MCF 10A (cell line): ENCODE measurements at regions of chr2 and their contacts with region 1.

Region 1: GRCh38 chr2:38315707-38316333 is 61.3 kb downstream of the ATL2 start:
- DNase-seq: peak; percentile 63
- H3K4me3 Mint-ChIP-seq: no peak overlapping the region
- H3K27ac Mint-ChIP-seq: no peak overlapping the region
- H3K4me1 Mint-ChIP-seq: no peaks in the 10 kb centered on the region
- H3K27me3 Mint-ChIP-seq: no peaks in the 10 kb centered on the region
- CTCF ChIP-seq: peak; percentile 75

Region 2: DNA sequence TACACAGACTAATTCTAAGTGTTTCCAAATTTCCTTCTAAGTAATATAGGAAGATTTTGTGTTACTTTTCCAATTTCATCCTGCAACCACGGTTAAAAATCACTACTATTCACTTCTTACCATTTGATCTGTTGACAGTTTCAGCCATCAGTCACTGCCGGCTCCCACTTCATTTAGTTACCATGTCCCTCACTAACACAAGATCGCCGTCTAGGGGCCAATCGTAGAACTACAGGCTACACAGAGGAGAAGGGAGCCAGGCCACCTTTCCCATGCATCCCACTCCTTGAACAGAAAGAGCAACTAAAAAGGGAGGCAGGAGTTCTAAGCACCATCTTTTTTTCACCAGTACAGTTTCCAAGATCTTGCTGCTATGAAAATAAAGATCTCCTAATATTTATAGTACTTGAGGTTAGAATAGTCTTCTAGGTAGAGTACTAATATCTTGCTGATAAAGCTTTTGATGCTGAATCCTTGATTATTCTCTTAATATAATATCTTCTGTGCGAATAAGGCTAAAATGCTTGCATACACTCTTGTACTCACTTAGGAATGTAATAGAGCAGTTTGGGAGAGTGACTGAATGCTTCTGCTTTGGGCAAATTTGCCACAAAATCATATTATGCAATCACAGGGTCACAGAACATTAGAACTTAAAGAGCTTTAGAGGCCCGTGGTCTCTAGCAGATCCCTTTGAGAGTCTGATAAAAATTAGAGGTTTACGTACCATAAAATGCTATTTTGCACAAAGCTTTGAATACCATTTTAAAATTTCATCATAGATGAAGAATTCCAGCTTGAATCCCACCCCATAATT is 200.4 kb before region 1 on chr2:
- CTCF ChIA-PET with region 1: no interaction called
- POLR2A ChIA-PET with region 1: no interaction called
- intact Hi-C with region 1: no loop called
- DNase-seq: peak; percentile 94
- H3K4me3 Mint-ChIP-seq: no peak overlapping the region
- H3K27ac Mint-ChIP-seq: no peak overlapping the region
- H3K4me1 Mint-ChIP-seq: peaks cover 28% of the 10 kb centered on the region
- H3K27me3 Mint-ChIP-seq: no peaks in the 10 kb centered on the region
- CTCF ChIP-seq: peak; percentile 96

Region 3: GRCh38 chr2:38508311-38509039 is 192.7 kb after region 1 on chr2:
- CTCF ChIA-PET with region 1: interaction called, 78 read pairs
- POLR2A ChIA-PET with region 1: interaction called, 24 read pairs
- intact Hi-C with region 1: loop called (anchors 1 kb)
- DNase-seq: peak; percentile 95
- H3K4me3 Mint-ChIP-seq: no peak overlapping the region
- H3K27ac Mint-ChIP-seq: no peak overlapping the region
- H3K4me1 Mint-ChIP-seq: peaks cover 34% of the 10 kb centered on the region
- H3K27me3 Mint-ChIP-seq: no peaks in the 10 kb centered on the region
- CTCF ChIP-seq: peak; percentile 51

Region 4: GRCh38 chr2:38528008-38528442 is 212.2 kb after region 1 on chr2:
- CTCF ChIA-PET with region 1: interaction called, 8 read pairs
- POLR2A ChIA-PET with region 1: interaction called, 5 read pairs
- intact Hi-C with region 1: loop called (anchors 5 kb)
- DNase-seq: peak; percentile 66
- H3K4me3 Mint-ChIP-seq: peak overlapping the region; percentile 69
- H3K27ac Mint-ChIP-seq: no peak overlapping the region
- H3K4me1 Mint-ChIP-seq: peaks cover 15% of the 10 kb centered on the region
- H3K27me3 Mint-ChIP-seq: no peaks in the 10 kb centered on the region
- CTCF ChIP-seq: no peak

Region 5: GRCh38 chr2:38581193-38582147 is 265.6 kb after region 1 on chr2:
- CTCF ChIA-PET with region 1: interaction called, 11 read pairs
- POLR2A ChIA-PET with region 1: interaction called, 3 read pairs
- intact Hi-C with region 1: loop called (anchors 1 kb)
- DNase-seq: peak; percentile 77
- H3K4me3 Mint-ChIP-seq: no peak overlapping the region
- H3K27ac Mint-ChIP-seq: no peak overlapping the region
- H3K4me1 Mint-ChIP-seq: peaks cover 5% of the 10 kb centered on the region
- H3K27me3 Mint-ChIP-seq: no peaks in the 10 kb centered on the region
- CTCF ChIP-seq: peak; percentile 56

Region 6: GRCh38 chr2:38765149-38765548 is 449.3 kb after region 1 on chr2:
- CTCF ChIA-PET with region 1: interaction called, 10 read pairs
- POLR2A ChIA-PET with region 1: no interaction called
- intact Hi-C with region 1: no loop called
- DNase-seq: no peak
- H3K4me3 Mint-ChIP-seq: no peak overlapping the region
- H3K27ac Mint-ChIP-seq: no peak overlapping the region
- H3K4me1 Mint-ChIP-seq: no peaks in the 10 kb centered on the region
- H3K27me3 Mint-ChIP-seq: no peaks in the 10 kb centered on the region
- CTCF ChIP-seq: no peak